CD8-positive, alpha-beta memory T cell (primary cell): ENCODE measurements at regions of chr14 and their contacts with region 1.

Region 1: DNA sequence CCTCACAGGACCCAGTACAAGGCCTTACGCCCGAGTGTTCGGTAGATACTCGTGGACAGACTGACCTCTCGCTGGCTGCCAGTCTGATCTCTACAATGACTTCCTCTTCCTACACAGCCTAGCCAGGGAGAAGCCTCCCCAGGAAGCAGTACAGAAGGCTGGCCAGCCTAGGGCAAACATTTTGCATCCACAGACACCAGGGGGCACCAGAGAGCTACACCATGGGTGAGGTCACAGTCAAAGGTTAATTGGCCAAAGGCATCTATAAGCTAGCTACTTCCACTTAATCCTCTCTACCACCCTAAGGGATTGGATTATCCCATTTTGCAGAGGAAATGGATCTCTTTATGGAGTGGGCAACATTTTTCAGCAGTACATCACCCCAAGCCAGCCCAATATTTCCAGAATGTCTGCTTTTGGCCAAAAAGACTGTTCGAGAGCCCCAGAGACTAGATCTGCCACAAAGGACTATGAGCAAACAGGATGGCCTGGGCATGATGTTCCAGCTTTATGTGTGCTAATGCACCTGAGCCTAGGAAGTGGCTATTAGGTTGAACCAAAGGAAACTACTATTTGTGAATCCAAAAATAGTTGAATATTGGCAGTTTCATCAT is 14.6 kb upstream of the PNMA1 start:
- DNase-seq: peak; percentile 71 to 87 (median 83)
- H3K4me3 ChIP-seq: no peak overlapping the region
- H3K4me3 Mint-ChIP-seq: no peak overlapping the region
- H3K27ac ChIP-seq: peak overlapping the region; percentile 17
- H3K27ac Mint-ChIP-seq: peak overlapping the region; percentile 71 to 94 (median 84)
- H3K4me1 ChIP-seq: peaks cover 9% of the 10 kb centered on the region
- H3K4me1 Mint-ChIP-seq: peaks cover 11 to 45% (median 23%) of the 10 kb centered on the region in 3 donors
- H3K27me3 ChIP-seq: no peaks in the 10 kb centered on the region
- H3K27me3 Mint-ChIP-seq: no peaks in the 10 kb centered on the region

Region 2: GRCh38 chr14:73713803-73714655 is 14.8 kb before region 1 on chr14 and contains the start of gene PNMA1:
- CTCF ChIA-PET with region 1: interaction called, 26 read pairs
- POLR2A ChIA-PET with region 1: interaction called, 7 read pairs
- DNase-seq: peak; percentile 84 to 92 (median 86)
- H3K4me3 ChIP-seq: peak within 1 kb of the TSS; percentile 75
- H3K4me3 Mint-ChIP-seq: peak within 1 kb of the TSS; percentile 91 to 99 (median 95)
- H3K27ac ChIP-seq: peak within 1 kb of the TSS; percentile 64
- H3K27ac Mint-ChIP-seq: peak within 1 kb of the TSS; percentile 93 to 98 (median 98)
- H3K4me1 ChIP-seq: peaks cover 6% of the 10 kb centered on the region
- H3K4me1 Mint-ChIP-seq: peaks cover 29 to 36% (median 34%) of the 10 kb centered on the region in 3 donors
- H3K27me3 ChIP-seq: no peaks in the 10 kb centered on the region
- H3K27me3 Mint-ChIP-seq: no peaks in the 10 kb centered on the region
- total RNA-seq, gene PNMA1: 56.8 to 61.0 TPM

Region 3: GRCh38 chr14:73746520-73747378 is 17.9 kb after region 1 on chr14:
- CTCF ChIA-PET with region 1: interaction called, 208 read pairs
- POLR2A ChIA-PET with region 1: no interaction called
- DNase-seq: no peak
- H3K4me3 ChIP-seq: no peak overlapping the region
- H3K4me3 Mint-ChIP-seq: peak overlapping the region in 5 of 7 donors; percentile 8 to 59 (median 43)
- H3K27ac ChIP-seq: peak overlapping the region; percentile 21
- H3K27ac Mint-ChIP-seq: peak overlapping the region; percentile 68 to 98 (median 79)
- H3K4me1 ChIP-seq: peaks cover 98% of the 10 kb centered on the region
- H3K4me1 Mint-ChIP-seq: peaks cover 89 to 100% (median 97%) of the 10 kb centered on the region in 3 donors
- H3K27me3 ChIP-seq: no peaks in the 10 kb centered on the region
- H3K27me3 Mint-ChIP-seq: no peaks in the 10 kb centered on the region

Region 4: GRCh38 chr14:73777401-73777800 is 48.6 kb after region 1 on chr14:
- CTCF ChIA-PET with region 1: interaction called, 31 read pairs
- POLR2A ChIA-PET with region 1: no interaction called
- DNase-seq: no peak
- H3K4me3 ChIP-seq: no peak overlapping the region
- H3K4me3 Mint-ChIP-seq: peak overlapping the region in 2 of 7 donors; percentile 25 to 59
- H3K27ac ChIP-seq: no peak overlapping the region
- H3K27ac Mint-ChIP-seq: peak overlapping the region; percentile 18 to 90 (median 74)
- H3K4me1 ChIP-seq: peaks cover 43% of the 10 kb centered on the region
- H3K4me1 Mint-ChIP-seq: peaks cover 60 to 76% (median 71%) of the 10 kb centered on the region in 3 donors
- H3K27me3 ChIP-seq: no peaks in the 10 kb centered on the region
- H3K27me3 Mint-ChIP-seq: no peaks in the 10 kb centered on the region

Region 5: DNA sequence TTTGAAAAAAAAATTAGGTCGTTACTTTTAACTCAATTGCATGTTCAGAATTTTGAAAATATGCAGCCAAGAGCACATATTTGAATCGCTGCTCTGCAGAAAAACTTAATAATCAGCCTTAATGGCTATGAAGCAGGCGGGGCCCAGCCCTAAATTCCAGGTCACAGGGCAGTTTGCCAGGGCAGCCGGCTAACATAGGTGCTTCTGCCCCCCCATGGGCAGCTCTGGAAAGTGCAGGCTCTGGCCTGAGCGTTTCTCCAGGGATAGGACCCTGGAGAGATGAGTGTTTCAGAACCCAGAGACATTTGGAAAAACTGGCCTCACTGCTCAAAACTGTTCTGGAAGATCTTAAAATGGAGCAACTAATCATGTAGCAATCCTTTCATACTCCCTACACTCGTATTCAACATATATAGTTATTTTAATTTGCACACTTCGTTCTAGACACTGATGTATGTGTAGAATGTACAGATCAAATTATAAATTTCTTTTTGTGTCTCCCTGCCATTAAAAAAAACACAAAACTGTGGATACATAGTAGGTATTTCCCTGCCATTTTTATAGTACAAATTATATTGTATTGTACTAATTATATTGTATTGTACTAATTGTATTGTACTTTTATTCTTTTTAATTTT is 96.8 kb after region 1 on chr14:
- CTCF ChIA-PET with region 1: interaction called, 128 read pairs
- POLR2A ChIA-PET with region 1: interaction called, 5 read pairs
- DNase-seq: peak; percentile 61 to 87 (median 64)
- H3K4me3 ChIP-seq: no peak overlapping the region
- H3K4me3 Mint-ChIP-seq: no peak overlapping the region
- H3K27ac ChIP-seq: no peak overlapping the region
- H3K27ac Mint-ChIP-seq: no peak overlapping the region
- H3K4me1 ChIP-seq: no peaks in the 10 kb centered on the region
- H3K4me1 Mint-ChIP-seq: peaks cover 6 to 16% (median 16%) of the 10 kb centered on the region in 3 donors
- H3K27me3 ChIP-seq: no peaks in the 10 kb centered on the region
- H3K27me3 Mint-ChIP-seq: peaks cover 0 to 4% of the 10 kb centered on the region in 2 donors